Ascending aorta (tissue), 2 donors: ENCODE measurements at regions of chr17 and their contacts with region 1.

Region 1: DNA sequence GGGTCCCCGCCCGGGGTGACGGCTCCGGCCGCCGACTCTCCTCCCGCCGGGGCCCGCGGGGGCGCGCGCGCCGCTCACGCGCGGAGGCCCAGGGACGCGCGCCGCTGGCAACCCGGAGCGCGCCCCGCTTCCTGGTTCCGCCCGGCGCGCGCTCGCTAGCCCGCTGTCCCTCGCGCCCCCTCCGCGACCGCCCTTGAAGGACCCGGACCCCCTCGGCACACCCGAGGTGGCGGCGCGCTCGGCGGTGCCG is at the start of gene STAT5B:
- DNase-seq: peak in 1 of 2 donors; percentile 81
- H3K4me3 ChIP-seq: peak within 1 kb of the TSS; percentile 93 to 94
- H3K27ac ChIP-seq: peak within 1 kb of the TSS; percentile 87 to 88
- H3K4me1 ChIP-seq: peaks cover 0 to 12% of the 10 kb centered on the region in 2 donors
- H3K27me3 ChIP-seq: no peaks in the 10 kb centered on the region
- CTCF ChIP-seq: no peak
- total RNA-seq, gene STAT5B: 80.6 TPM

Region 2: DNA sequence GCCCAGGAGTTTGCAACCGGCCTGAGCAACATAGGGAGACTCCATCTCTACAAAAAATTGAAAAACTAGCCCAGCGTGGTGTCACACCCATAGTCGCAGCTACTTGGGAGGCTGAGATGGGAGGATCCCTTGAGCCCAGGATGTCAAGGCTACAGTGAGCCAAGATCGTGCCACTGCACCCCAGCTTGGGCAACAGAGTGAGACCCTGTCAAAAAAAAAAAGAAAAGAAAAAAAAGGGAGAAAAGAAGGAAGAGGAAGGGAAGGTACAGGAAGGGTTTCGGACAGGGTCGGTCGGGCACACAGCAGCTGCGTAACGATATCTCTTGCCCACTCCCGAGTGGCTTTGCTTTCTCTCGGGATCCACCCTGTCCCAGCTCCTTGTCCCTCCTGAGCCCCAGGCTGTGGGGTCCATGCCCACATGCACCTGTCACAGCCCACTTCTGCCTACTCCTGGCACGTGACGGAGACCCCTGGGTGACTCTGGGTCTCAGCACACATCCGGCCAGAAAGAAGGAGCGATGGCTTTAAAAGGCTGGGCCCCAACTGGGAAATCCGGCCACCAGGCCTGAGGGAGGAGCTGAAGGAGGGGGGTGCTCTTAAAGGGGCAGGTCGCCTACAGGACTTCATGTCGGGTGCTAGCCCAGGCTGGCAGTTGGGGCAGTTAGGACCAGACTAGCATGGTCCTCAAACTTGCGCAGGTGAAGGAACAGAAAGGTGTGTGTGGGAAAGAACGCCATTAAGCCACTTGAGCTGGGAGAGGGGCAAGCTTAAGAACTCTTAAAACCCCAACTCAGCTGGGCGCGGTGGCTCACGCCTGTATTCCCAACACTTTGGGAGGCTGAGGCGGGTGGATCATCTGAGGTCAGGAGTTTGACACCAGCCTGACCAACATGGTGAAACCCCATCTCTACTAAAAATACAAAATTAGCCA is 82.0 kb before region 1 on chr17 and contains the start of gene GHDC:
- intact Hi-C with region 1: loop called (anchors 5 kb)
- DNase-seq: peak; percentile 45 to 94
- H3K4me3 ChIP-seq: peak within 1 kb of the TSS; percentile 65 to 66
- H3K27ac ChIP-seq: peak within 1 kb of the TSS; percentile 59 to 67
- H3K4me1 ChIP-seq: peaks cover 7 to 16% of the 10 kb centered on the region in 2 donors
- H3K27me3 ChIP-seq: no peaks in the 10 kb centered on the region
- CTCF ChIP-seq: no peak
- total RNA-seq, gene GHDC: 94.3 TPM

Region 3: GRCh38 chr17:42230225-42230624 is 46.1 kb before region 1 on chr17:
- intact Hi-C with region 1: loop called (anchors 5 kb)
- DNase-seq: no peak
- H3K4me3 ChIP-seq: no peak overlapping the region
- H3K27ac ChIP-seq: no peak overlapping the region
- H3K4me1 ChIP-seq: peaks cover 0 to 11% of the 10 kb centered on the region in 2 donors
- H3K27me3 ChIP-seq: no peaks in the 10 kb centered on the region
- CTCF ChIP-seq: no peak

Region 4: GRCh38 chr17:42248351-42249179 is 27.7 kb before region 1 on chr17:
- intact Hi-C with region 1: loop called (anchors 2 kb)
- DNase-seq: peak; percentile 47 to 91
- H3K4me3 ChIP-seq: peak overlapping the region; percentile 24 to 49
- H3K27ac ChIP-seq: peak overlapping the region; percentile 87 to 91
- H3K4me1 ChIP-seq: peaks cover 11 to 18% of the 10 kb centered on the region in 2 donors
- H3K27me3 ChIP-seq: no peaks in the 10 kb centered on the region
- CTCF ChIP-seq: no peak